ENCODE measurements at regions of chr6 and their contacts with region 1.

Region 1: DNA sequence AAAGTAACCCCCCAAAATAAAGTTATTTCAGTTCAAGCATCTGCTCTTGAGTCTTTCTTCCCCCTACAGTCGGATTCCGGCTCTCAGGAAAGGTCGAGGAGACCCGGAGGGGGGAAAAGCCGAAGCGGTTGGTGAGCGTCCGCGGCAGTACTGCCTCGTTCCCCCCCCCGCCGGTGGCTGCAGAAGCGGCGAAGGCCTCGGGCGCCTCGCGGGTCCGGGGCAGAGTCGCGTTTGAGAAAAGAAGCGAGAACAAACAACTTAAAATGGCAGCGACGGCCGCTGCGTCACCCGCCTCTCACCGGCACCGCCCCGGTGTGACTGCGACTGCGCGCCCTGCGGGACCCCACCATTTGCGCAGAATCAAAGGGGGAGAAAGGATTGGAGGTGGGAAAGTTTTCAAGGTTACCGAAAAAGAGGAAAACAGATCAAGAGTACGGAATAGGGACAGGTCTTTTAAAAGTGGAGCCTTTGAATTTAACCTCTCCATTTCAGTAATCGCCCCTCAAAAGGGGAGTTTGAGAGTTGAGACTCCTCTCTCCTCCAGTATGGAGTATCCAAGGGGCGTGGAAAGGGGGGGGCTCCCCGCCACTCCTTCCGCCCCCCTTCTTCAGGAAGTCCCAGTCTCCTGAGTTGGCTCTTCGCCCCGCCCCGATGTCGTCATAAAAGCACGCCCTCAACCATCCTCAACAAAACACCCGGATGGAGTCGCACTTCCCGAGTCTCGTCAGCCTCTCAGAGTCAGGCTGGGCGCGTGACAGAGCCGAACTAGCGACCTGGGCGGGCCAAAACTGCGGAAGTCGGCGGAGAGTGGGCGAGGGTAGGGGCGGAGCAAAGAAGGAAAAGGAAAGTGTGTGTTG is 1.9 kb upstream of the C6orf62 start:
- DNase-seq: peak; percentile 97
- ATAC-seq: peak; percentile 82
- H3K4me3 Mint-ChIP-seq: peak overlapping the region; percentile 93
- H3K27ac Mint-ChIP-seq: peak overlapping the region; percentile 99
- H3K4me1 Mint-ChIP-seq: peaks cover 43% of the 10 kb centered on the region
- H3K27me3 Mint-ChIP-seq: no peaks in the 10 kb centered on the region
- CTCF ChIP-seq: no peak

Region 2: DNA sequence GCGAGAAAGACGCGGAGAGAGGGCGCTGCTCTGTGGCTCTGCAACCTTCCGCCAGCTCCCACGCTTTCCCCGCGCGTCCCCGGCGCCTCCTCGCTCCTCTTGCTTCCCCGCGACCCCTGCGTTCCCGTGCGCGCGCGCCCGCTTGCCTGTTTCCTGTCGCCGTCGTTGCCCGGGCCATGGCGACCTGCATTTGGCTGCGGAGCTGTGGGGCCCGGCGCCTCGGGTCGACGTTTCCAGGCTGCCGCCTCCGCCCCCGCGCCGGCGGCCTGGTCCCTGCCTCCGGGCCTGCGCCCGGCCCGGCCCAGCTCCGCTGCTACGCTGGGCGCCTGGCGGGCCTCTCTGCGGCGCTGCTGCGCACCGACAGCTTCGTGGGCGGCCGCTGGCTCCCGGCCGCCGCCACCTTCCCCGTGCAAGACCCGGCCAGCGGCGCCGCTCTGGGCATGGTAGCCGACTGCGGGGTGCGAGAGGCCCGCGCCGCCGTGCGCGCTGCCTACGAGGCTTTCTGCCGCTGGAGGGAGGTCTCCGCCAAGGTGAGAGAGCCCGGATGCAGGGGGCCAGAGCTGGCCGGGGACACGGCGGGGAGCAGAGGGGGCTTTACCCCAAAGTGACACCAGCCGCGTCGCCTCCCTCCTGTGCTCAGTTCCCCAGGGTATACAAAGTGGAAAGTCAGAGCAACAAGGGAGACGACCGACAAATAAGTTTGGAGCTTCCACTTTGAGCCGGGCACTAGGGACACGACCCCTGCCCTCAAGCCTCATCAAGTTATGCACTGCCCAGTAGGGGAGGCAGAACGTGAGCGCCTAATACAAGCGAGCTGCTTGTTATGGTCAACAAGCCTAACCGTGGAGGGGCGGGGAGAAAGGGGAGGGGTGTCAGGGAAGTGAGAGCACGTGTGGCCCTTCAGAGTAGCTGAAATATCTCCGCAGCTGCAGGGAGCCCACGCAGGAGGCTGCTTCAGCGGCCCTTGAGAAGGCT is 225.7 kb before region 1 on chr6 and contains the start of gene ALDH5A1:
- CTCF ChIA-PET with region 1: interaction called, 3 read pairs
- POLR2A ChIA-PET with region 1: interaction called, 32 read pairs
- intact Hi-C with region 1: loop called (anchors 1 kb)
- DNase-seq: peak; percentile 75
- ATAC-seq: peak; percentile 75
- H3K4me3 Mint-ChIP-seq: peak within 1 kb of the TSS; percentile 86
- H3K27ac Mint-ChIP-seq: peak within 1 kb of the TSS; percentile 89
- H3K4me1 Mint-ChIP-seq: peaks cover 33% of the 10 kb centered on the region
- H3K27me3 Mint-ChIP-seq: no peaks in the 10 kb centered on the region
- CTCF ChIP-seq: peak; percentile 29
- total RNA-seq, gene ALDH5A1: 15.9 and 17.5 TPM in 2 replicates

Region 3: GRCh38 chr6:24646782-24647181 is 74.0 kb before region 1 on chr6:
- CTCF ChIA-PET with region 1: no interaction called
- POLR2A ChIA-PET with region 1: interaction called, 14 read pairs
- intact Hi-C with region 1: loop called (anchors 1 kb)
- DNase-seq: no peak
- ATAC-seq: no peak
- H3K4me3 Mint-ChIP-seq: peak overlapping the region; percentile 89
- H3K27ac Mint-ChIP-seq: peak overlapping the region; percentile 91
- H3K4me1 Mint-ChIP-seq: peaks cover 28% of the 10 kb centered on the region
- H3K27me3 Mint-ChIP-seq: no peaks in the 10 kb centered on the region
- CTCF ChIP-seq: no peak

Region 4: DNA sequence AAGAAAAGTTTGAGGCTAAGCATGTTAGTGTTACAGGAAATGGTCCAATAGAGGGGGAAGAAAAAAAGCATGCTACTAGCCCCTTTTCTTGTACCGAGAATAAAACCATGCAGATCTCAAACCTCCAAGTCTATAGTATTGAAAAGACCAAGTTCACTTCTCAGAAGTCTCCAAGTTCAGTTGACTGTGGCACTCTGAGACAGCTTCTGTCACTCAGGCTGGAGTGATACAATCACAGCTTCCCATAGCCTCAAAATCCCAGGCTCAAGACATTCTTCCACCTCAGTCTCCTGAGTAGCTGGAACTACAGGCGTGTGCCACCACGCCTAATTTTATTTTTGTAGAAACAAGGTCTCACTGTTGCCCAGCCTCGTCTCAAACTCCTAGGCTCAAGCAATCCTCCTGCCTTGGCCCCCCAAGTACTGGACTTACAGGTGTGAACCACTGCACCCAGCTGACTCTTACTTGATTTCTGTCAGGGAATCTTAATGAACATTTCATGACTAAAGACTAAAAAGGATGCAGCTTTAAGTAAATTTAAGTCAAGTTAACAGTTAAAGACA is 18.0 kb before region 1 on chr6:
- CTCF ChIA-PET with region 1: no interaction called
- POLR2A ChIA-PET with region 1: interaction called, 7 read pairs
- intact Hi-C with region 1: loop called (anchors 2 kb)
- DNase-seq: no peak
- ATAC-seq: no peak
- H3K4me3 Mint-ChIP-seq: no peak overlapping the region
- H3K27ac Mint-ChIP-seq: peak overlapping the region; percentile 50
- H3K4me1 Mint-ChIP-seq: peaks cover 21% of the 10 kb centered on the region
- H3K27me3 Mint-ChIP-seq: no peaks in the 10 kb centered on the region
- CTCF ChIP-seq: no peak

Region 5: DNA sequence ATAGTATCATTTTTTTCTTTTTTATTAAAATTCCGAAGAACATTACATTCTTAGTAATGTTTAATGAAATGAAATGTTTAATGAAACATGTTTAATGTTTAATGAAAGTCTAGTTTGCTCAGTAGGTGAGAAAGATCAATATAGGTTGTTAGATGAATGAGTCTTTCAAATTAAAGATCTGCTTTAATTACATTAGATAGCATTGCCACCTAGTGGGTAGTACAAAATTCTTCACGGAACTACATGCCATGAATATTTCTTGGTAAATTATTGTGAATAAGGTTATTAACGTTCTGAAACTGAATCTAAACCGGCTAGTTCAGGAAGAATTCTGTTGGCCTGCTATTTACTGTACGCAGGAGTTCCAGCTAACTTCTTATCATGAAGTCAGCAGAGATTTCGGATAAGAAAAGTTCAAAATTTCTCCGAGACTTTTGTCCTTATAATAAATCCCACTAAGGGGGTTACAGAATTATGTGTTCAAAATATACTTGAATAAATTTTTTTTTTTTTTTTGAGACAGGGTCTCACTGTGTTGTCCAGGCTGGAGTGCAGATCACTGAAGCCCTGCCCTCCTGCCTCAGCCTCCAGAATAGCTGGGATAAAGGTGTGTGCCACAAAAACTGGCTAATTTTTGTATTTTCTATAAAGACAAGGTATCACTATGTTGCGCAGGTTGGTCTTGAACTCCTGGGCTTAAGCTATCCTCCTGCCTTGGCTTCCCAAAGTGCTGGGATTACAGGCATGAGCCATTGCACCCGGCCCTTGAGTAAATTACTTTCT is 46.0 kb after region 1 on chr6:
- CTCF ChIA-PET with region 1: interaction called, 11 read pairs
- POLR2A ChIA-PET with region 1: interaction called, 10 read pairs
- intact Hi-C with region 1: loop called (anchors 2 kb)
- DNase-seq: no peak
- ATAC-seq: peak; percentile 78
- H3K4me3 Mint-ChIP-seq: no peak overlapping the region
- H3K27ac Mint-ChIP-seq: no peak overlapping the region
- H3K4me1 Mint-ChIP-seq: no peaks in the 10 kb centered on the region
- H3K27me3 Mint-ChIP-seq: no peaks in the 10 kb centered on the region
- CTCF ChIP-seq: no peak

Region 6: DNA sequence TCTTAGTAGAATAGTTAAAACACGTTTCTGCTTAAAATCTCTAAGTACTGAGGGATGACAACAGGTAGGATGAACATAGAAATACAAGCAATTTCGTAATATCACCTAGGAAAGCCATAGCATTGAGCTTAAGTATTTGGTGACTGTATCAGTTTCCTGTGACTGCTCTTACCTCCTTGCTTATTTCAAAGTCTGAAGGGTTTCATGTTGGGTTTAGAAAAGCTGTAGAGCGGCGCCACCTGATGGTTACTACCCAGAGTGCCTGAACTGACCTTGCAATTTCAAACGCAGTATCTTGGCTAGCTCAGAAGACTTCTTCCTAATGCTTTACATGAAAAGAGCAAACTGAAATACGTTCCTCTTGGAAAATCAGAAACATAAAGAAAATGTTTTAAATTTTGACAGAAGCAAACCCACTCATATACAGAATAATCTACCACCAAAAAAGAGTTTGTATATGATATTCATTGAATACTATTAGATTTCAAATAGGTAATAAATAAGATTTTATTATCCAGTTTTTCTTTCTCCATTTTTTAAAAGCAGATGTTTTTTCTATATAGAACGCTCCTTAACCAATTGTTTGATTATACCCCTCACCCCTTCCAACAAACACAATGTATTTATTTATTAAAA is 297.2 kb after region 1 on chr6:
- CTCF ChIA-PET with region 1: no interaction called
- POLR2A ChIA-PET with region 1: no interaction called
- intact Hi-C with region 1: loop called (anchors 10 kb)
- DNase-seq: no peak
- ATAC-seq: peak; percentile 68
- H3K4me3 Mint-ChIP-seq: peak overlapping the region; percentile 32
- H3K27ac Mint-ChIP-seq: peak overlapping the region; percentile 70
- H3K4me1 Mint-ChIP-seq: peaks cover 56% of the 10 kb centered on the region
- H3K27me3 Mint-ChIP-seq: no peaks in the 10 kb centered on the region
- CTCF ChIP-seq: no peak

Region 7: GRCh38 chr6:25138237-25139125 is 417.6 kb after region 1 on chr6:
- CTCF ChIA-PET with region 1: no interaction called
- POLR2A ChIA-PET with region 1: interaction called, 4 read pairs
- intact Hi-C with region 1: loop called (anchors 1 kb)
- DNase-seq: peak; percentile 35
- ATAC-seq: peak; percentile 94
- H3K4me3 Mint-ChIP-seq: peak overlapping the region; percentile 87
- H3K27ac Mint-ChIP-seq: peak overlapping the region; percentile 98
- H3K4me1 Mint-ChIP-seq: peaks cover 36% of the 10 kb centered on the region
- H3K27me3 Mint-ChIP-seq: no peaks in the 10 kb centered on the region
- CTCF ChIP-seq: no peak

Measured in activated B cell treated with CpG ODN at 0.5 μM for 24 hours (primary cell).